BJ (cell line): ENCODE measurements at regions of chr21 and their contacts with region 1.

Region 1: GRCh38 chr21:33360881-33361602 is 36.3 kb downstream of the IFNAR1 start:
- DNase-seq: peak; percentile 76
- H3K4me3 ChIP-seq: no peak overlapping the region
- H3K27me3 ChIP-seq: no peaks in the 10 kb centered on the region
- CTCF ChIP-seq: peak; percentile 86

Region 2: DNA sequence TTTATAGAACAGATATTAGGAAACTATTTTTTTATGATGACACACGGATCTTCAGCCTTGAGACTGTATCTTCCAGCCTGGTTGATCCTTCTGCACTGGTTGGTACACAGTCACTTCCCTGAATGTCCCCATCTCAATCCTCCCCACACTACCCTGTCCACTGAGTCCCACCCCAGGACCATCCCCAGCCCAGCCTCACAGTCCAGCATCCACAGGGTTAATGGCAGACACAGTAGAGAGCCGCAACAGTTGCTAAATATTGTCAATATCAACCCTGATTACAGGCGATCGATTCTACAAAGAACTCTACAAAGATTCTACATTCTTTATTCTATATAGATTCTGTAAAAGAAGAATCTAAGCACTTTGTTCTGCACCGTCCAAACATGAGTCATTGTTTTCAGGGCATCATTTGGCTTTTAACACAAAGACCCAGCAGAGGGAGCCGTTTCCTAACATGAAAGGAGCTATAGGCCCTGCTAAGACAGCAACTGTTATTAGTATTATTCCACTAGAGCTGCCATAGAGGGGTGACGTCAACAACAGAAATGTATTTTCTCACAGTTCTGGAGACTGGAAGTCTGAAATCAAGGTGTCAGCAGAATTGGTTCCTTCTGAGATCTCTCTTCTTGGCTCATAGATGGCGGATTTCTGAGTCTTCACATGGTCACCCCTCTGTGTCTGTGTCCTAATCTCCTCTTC is 161.4 kb before region 1 on chr21:
- CTCF ChIA-PET with region 1: interaction called, 28 read pairs
- POLR2A ChIA-PET with region 1: no interaction called
- DNase-seq: peak; percentile 63
- H3K4me3 ChIP-seq: no peak overlapping the region
- H3K27me3 ChIP-seq: peaks cover 3% of the 10 kb centered on the region; the same call in 1 of the 2 replicates
- CTCF ChIP-seq: peak; percentile 77

Region 3: GRCh38 chr21:33348706-33349105 is 12.3 kb before region 1 on chr21:
- CTCF ChIA-PET with region 1: interaction called, 20 read pairs
- POLR2A ChIA-PET with region 1: interaction called, 6 read pairs
- DNase-seq: no peak
- H3K4me3 ChIP-seq: no peak overlapping the region
- H3K27me3 ChIP-seq: no peaks in the 10 kb centered on the region
- CTCF ChIP-seq: no peak

Region 4: DNA sequence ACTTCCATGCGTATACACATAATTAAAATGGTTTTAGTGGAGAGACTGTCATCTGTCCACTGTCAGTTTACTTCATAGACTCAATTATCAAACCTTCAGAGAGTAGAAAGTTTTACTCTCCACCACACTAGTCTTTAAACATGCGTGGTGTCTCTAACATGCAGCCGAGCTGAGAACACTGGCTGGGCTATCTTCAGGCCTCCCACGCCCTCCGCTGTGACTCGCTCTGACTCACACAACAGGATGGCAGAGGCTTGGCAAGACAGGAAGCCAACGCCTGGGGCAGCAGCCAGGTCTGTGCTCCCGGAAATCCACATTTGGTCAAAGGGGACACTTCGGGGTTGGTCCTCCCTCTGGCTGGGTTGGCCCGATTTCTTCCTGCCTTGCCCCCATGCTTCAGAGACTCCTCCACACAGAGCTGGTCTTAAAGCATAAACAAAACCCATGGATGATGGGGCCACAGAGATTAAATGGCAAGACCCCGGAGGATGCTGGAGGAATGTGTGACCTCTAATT is 19.5 kb after region 1 on chr21:
- CTCF ChIA-PET with region 1: interaction called, 30 read pairs
- POLR2A ChIA-PET with region 1: interaction called, 7 read pairs
- DNase-seq: peak; percentile 81
- H3K4me3 ChIP-seq: no peak overlapping the region
- H3K27me3 ChIP-seq: no peaks in the 10 kb centered on the region
- CTCF ChIP-seq: no peak

Region 5: GRCh38 chr21:33428669-33429068 is 67.6 kb after region 1 on chr21:
- CTCF ChIA-PET with region 1: interaction called, 10 read pairs
- POLR2A ChIA-PET with region 1: no interaction called
- DNase-seq: no peak
- H3K4me3 ChIP-seq: no peak overlapping the region
- H3K27me3 ChIP-seq: no peaks in the 10 kb centered on the region
- CTCF ChIP-seq: no peak

Region 6: DNA sequence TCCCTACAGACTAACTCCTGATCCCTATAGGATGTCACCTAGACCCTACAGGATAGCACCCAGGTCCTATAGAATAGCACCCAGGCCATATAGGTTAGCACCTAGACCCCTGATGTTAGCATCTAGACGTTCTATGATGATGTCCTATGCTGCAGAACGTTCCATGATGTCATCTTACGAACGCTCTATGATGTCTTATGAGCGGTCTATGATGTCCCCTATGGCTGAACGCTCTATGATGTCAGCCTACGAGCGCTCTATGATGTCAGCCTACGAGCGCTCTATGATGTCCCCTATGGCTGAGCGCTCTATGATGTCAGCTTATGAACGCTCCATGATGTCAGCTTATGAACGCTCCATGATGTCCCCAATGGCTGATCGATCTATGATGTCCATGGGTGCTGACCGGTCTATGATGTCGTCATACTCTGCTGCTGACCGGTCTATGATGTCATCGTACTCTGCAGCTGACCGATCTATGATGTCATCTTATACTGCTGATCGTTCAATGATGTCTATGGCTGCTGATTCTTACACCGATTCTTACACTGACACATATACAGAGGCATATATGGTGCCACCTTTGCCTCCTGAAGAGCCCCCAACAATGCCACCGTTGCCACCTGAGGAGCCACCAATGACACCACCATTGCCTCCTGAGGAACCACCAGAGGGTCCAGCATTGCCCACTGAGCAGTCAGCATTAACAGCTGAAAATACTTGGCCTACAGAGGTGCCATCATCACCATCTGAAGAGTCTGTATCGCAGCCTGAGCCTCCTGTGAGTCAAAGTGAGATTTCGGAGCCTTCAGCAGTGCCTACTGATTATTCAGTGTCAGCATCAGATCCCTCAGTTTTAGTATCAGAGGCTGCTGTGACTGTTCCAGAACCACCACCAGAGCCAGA is 191.3 kb after region 1 on chr21:
- CTCF ChIA-PET with region 1: no interaction called
- POLR2A ChIA-PET with region 1: no interaction called
- DNase-seq: no peak
- H3K4me3 ChIP-seq: no peak overlapping the region
- H3K27me3 ChIP-seq: no peaks in the 10 kb centered on the region
- CTCF ChIP-seq: no peak